ENCODE measurements at regions of chr11 and their contacts with region 1.

Region 1: GRCh38 chr11:61254403-61255025 is 13.5 kb downstream of the PGA5 start:
- DNase-seq: peak; percentile 73
- ATAC-seq: peak; percentile 98
- H3K4me3 Mint-ChIP-seq: no peak overlapping the region
- H3K27ac Mint-ChIP-seq: no peak overlapping the region
- H3K4me1 Mint-ChIP-seq: no peaks in the 10 kb centered on the region
- H3K27me3 Mint-ChIP-seq: no peaks in the 10 kb centered on the region
- CTCF ChIP-seq: peak; percentile 90

Region 2: DNA sequence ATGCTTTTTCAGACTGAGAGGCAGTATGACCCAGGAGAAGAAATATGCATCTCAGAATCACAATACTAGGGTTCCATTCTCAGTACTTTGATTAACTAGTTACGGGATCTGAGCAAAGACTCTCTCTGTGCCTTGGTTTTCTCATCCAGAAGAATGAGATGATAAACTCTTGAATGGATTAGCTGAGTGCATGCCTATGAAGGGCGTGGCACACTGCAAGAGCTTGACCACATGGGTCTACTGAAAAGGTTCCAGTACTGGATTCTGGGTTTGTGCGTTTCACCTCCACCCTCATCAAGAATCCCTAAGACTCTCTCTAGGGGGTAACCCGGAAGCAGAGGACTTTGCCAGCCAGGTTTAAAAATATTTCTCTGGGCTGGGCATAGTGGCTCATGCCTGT is 12.1 kb after region 1 on chr11:
- CTCF ChIA-PET with region 1: interaction called, 11 read pairs
- POLR2A ChIA-PET with region 1: interaction called, 3 read pairs
- intact Hi-C with region 1: no loop called
- DNase-seq: no peak
- ATAC-seq: no peak
- H3K4me3 Mint-ChIP-seq: no peak overlapping the region
- H3K27ac Mint-ChIP-seq: no peak overlapping the region
- H3K4me1 Mint-ChIP-seq: no peaks in the 10 kb centered on the region
- H3K27me3 Mint-ChIP-seq: no peaks in the 10 kb centered on the region
- CTCF ChIP-seq: no peak

Region 3: GRCh38 chr11:61294717-61295595 is 40.4 kb after region 1 on chr11 and contains the start of gene VWCE:
- CTCF ChIA-PET with region 1: interaction called, 16 read pairs
- POLR2A ChIA-PET with region 1: interaction called, 3 read pairs
- intact Hi-C with region 1: no loop called
- DNase-seq: peak; percentile 88
- ATAC-seq: peak; percentile 83
- H3K4me3 Mint-ChIP-seq: peak within 1 kb of the TSS; percentile 92
- H3K27ac Mint-ChIP-seq: peak within 1 kb of the TSS; percentile 92
- H3K4me1 Mint-ChIP-seq: peaks cover 42% of the 10 kb centered on the region
- H3K27me3 Mint-ChIP-seq: peaks cover 5% of the 10 kb centered on the region
- CTCF ChIP-seq: peak; percentile 23
- total RNA-seq, gene VWCE: 23.3 to 25.8 TPM

Region 4: GRCh38 chr11:61392981-61393595 is 138.6 kb after region 1 on chr11:
- CTCF ChIA-PET with region 1: interaction called, 15 read pairs
- POLR2A ChIA-PET with region 1: no interaction called
- intact Hi-C with region 1: loop called (anchors 10 kb)
- DNase-seq: peak; percentile 35
- ATAC-seq: peak; percentile 41
- H3K4me3 Mint-ChIP-seq: peak overlapping the region; percentile 80
- H3K27ac Mint-ChIP-seq: peak overlapping the region; percentile 88
- H3K4me1 Mint-ChIP-seq: peaks cover 24% of the 10 kb centered on the region
- H3K27me3 Mint-ChIP-seq: no peaks in the 10 kb centered on the region
- CTCF ChIP-seq: peak; percentile 28

Measured in activated CD8-positive, alpha-beta T cell treated with anti-CD3 and anti-CD28 coated beads for 36 hours (primary cell).